ENCODE measurements at regions of chr7 and their contacts with region 1.

Region 1: GRCh38 chr7:127114742-127115265 is 137.9 kb downstream of the GRM8 start:
- DNase-seq: no peak
- H3K4me3 ChIP-seq: no peak overlapping the region
- H3K27ac ChIP-seq: no peak overlapping the region
- H3K27me3 ChIP-seq: peaks cover 0 to under 1% (median 0%) of the 10 kb centered on the region in 45 donors
- CTCF ChIP-seq: no peak

Region 2: DNA sequence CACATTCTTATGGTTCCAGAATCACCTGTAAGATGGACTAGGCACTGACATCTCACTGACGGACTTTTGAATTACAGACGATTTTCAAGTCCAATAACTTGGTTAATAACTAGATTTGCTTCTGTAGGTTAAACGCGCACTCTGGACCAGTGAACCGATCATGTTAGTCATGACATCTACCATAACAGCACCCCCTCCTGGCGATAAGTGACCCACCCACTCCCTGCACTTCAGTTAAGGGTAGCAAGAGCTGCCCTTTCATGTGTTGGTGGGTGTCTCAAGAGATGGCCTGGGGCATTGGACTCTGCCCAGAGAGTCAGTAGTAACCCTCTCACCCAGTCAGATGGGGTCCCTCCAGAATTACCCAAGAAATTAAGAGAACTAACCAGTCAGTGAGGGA is 125.0 kb after region 1 on chr7:
- intact Hi-C with region 1: loop called in 1 of 2 experiments (anchors 10 kb)
- DNase-seq: no peak
- H3K4me3 ChIP-seq: no peak overlapping the region
- H3K27ac ChIP-seq: no peak overlapping the region
- H3K27me3 ChIP-seq: no peaks in the 10 kb centered on the region
- CTCF ChIP-seq: peak in 17 of 56 donors; percentile 8 to 39 (median 19)

Measured in dorsolateral prefrontal cortex (tissue), 120 donors.